Activated CD4-positive, alpha-beta T cell treated with anti-CD3 and anti-CD28 coated beads for 36 hours (primary cell): ENCODE measurements at regions of chr10 and their contacts with region 1.

Region 1: DNA sequence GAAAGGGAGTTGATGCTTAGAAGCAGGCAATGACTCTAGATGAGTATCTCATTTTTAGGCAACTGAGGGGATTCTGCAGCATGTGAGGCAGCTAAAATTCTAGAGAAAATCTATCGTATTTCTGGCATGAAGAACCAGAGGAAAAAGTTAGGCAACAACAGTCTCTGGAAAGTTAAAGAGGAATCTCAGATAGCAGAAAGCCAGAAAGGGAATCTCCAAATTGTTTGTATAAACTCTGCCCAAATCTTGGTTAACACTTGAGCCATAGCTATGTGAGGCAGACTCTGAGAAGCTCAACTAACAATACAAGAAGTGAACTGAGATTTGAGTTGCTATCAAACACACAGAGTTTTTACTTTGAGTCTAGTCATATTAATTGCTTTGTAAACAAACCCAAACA is 215.8 kb upstream of the FZD8 start:
- DNase-seq: no peak
- ATAC-seq: no peak
- H3K4me3 Mint-ChIP-seq: no peak overlapping the region
- H3K27ac Mint-ChIP-seq: no peak overlapping the region
- H3K4me1 Mint-ChIP-seq: no peaks in the 10 kb centered on the region
- H3K27me3 Mint-ChIP-seq: no peaks in the 10 kb centered on the region

Region 2: DNA sequence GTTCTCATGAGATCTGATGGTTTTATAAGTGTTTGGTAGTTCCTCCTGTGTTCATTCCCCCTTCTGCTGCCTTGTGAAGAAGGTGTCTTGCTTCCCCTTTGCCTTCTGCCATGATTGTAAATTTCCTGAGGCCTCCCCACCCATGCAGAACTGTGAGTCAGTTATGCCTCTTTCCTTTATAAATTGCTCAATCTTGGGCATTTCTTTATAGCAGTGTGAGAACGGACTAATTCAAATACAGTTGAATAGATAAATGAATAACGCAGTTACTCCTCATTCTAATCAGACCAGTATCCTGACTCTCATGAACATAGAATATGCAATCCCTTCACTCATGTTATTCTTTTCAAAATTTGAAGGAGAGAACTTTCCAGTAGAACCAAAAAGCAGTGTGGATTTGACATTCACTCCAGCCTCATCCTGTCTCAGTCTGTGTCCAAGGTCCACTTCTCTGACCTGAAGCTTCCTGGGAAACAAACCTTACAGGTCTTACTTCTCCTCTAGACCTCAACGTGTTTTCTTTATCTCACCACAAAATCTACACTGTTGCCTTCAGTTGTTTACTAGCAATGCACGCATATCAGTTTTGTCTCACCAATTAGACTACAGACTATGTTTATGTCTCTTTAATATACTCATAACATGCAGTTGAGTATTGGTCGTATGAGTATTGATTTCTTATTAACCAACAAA is 159.4 kb after region 1 on chr10:
- CTCF ChIA-PET with region 1: no interaction called
- POLR2A ChIA-PET with region 1: no interaction called
- intact Hi-C with region 1: loop called in 1 of 2 experiments (anchors 2 kb)
- DNase-seq: no peak
- ATAC-seq: no peak
- H3K4me3 Mint-ChIP-seq: no peak overlapping the region
- H3K27ac Mint-ChIP-seq: no peak overlapping the region
- H3K4me1 Mint-ChIP-seq: no peaks in the 10 kb centered on the region
- H3K27me3 Mint-ChIP-seq: no peaks in the 10 kb centered on the region